OCI-LY7 (cell line): ENCODE measurements at regions of chr12 and their contacts with region 1.

Region 1: GRCh38 chr12:71858848-71859247 is 19.3 kb downstream of the TBC1D15 start:
- DNase-seq: no peak
- H3K4me3 ChIP-seq: no peak overlapping the region
- H3K27ac ChIP-seq: no peak overlapping the region
- H3K4me1 ChIP-seq: peaks cover 5% of the 10 kb centered on the region
- CTCF ChIP-seq: no peak

Region 2: DNA sequence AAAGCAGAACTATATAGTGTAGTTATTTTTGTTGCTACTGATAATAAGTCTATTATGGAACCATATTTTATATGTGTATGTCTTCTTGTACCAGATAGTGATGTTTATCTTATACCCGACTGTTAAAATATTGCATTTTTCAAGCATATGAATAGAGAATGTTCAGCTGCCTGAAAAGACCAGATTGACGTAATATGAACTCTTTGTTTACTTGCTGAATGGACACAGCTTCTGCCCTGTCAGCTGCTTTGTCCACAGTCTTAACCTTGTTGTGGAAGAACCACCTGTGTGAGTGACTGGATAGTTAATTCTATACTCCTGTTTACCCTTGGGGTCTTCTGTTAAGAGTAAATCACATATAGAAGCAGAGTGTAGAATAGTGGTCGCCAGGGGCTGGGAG is 310.0 kb before region 1 on chr12:
- CTCF ChIA-PET with region 1: no interaction called
- POLR2A ChIA-PET with region 1: no interaction called
- intact Hi-C with region 1: no loop called
- DNase-seq: no peak
- H3K4me3 ChIP-seq: no peak overlapping the region
- H3K27ac ChIP-seq: no peak overlapping the region
- H3K4me1 ChIP-seq: no peaks in the 10 kb centered on the region
- CTCF ChIP-seq: no peak

Region 3: GRCh38 chr12:71828810-71829209 is 30.0 kb before region 1 on chr12:
- CTCF ChIA-PET with region 1: no interaction called
- POLR2A ChIA-PET with region 1: no interaction called
- intact Hi-C with region 1: no loop called
- DNase-seq: no peak
- H3K4me3 ChIP-seq: no peak overlapping the region
- H3K27ac ChIP-seq: no peak overlapping the region
- H3K4me1 ChIP-seq: no peaks in the 10 kb centered on the region
- CTCF ChIP-seq: no peak

Region 4: GRCh38 chr12:71846322-71846940 is 12.4 kb before region 1 on chr12:
- CTCF ChIA-PET with region 1: interaction called, 6 read pairs
- POLR2A ChIA-PET with region 1: interaction called, 12 read pairs
- intact Hi-C with region 1: no loop called
- DNase-seq: peak; percentile 48
- H3K4me3 ChIP-seq: no peak overlapping the region
- H3K27ac ChIP-seq: no peak overlapping the region
- H3K4me1 ChIP-seq: peaks cover 9% of the 10 kb centered on the region
- CTCF ChIP-seq: peak; percentile 91

Region 5: GRCh38 chr12:71900091-71900490 is 41.2 kb after region 1 on chr12:
- CTCF ChIA-PET with region 1: no interaction called
- POLR2A ChIA-PET with region 1: no interaction called
- intact Hi-C with region 1: no loop called
- DNase-seq: no peak
- H3K4me3 ChIP-seq: no peak overlapping the region
- H3K27ac ChIP-seq: no peak overlapping the region
- H3K4me1 ChIP-seq: no peaks in the 10 kb centered on the region
- CTCF ChIP-seq: peak; percentile 48